IMR-90 (cell line): ENCODE measurements at regions of chr12 and their contacts with region 1.

Region 1: GRCh38 chr12:61939977-61940376 is 320.2 kb upstream of the USP15 start:
- DNase-seq: no peak
- ATAC-seq: no peak
- H3K4me3 ChIP-seq: no peak overlapping the region
- H3K27ac ChIP-seq: no peak overlapping the region
- H3K4me1 ChIP-seq: no peaks in the 10 kb centered on the region
- H3K27me3 ChIP-seq: no peaks in the 10 kb centered on the region
- CTCF ChIP-seq: no peak
- POLR2A ChIP-seq: no peak
- RAD21 ChIP-seq: no peak

Region 2: DNA sequence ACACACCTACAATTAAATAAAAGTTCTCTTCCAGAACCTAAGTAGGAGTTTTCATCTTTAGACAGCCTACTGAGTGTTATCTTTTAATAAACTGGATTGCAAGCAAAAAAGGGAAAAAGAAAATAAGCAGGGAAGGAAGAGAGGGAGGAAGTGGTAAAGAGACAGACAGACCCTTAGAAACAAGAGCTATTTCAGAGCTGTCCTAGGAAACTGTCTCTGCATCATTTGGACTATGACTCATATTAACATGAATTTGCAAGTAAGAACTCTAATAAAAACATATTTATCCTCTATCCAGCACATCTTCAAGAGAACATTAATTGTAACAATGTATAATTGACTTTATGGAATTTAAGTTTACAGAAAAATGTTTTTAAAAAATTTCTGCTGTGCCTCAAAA is 118.6 kb before region 1 on chr12:
- CTCF ChIA-PET with region 1: no interaction called
- POLR2A ChIA-PET with region 1: no interaction called
- dilution Hi-C with region 1: no loop called
- in situ Hi-C with region 1: no loop called
- intact Hi-C with region 1: loop called (anchors 10 kb)
- DNase-seq: no peak
- ATAC-seq: no peak
- H3K4me3 ChIP-seq: no peak overlapping the region
- H3K27ac ChIP-seq: no peak overlapping the region
- H3K4me1 ChIP-seq: no peaks in the 10 kb centered on the region
- H3K27me3 ChIP-seq: no peaks in the 10 kb centered on the region
- CTCF ChIP-seq: no peak
- POLR2A ChIP-seq: no peak
- RAD21 ChIP-seq: no peak